ENCODE measurements at regions of chrX and their contacts with region 1.

Region 1: GRCh38 chrX:19544693-19545305 is 29.5 kb upstream of the MAP3K15 start:
- DNase-seq: no peak
- ATAC-seq: peak; percentile 64

Region 2: GRCh38 chrX:18596096-18596495 is 948.7 kb before region 1 on chrX:
- intact Hi-C with region 1: no loop called
- DNase-seq: no peak
- ATAC-seq: peak; percentile 52

Region 3: GRCh38 chrX:19613645-19614323 is 69.0 kb after region 1 on chrX:
- intact Hi-C with region 1: loop called (anchors 10 kb)
- DNase-seq: no peak
- ATAC-seq: peak; percentile 73

Region 4: DNA sequence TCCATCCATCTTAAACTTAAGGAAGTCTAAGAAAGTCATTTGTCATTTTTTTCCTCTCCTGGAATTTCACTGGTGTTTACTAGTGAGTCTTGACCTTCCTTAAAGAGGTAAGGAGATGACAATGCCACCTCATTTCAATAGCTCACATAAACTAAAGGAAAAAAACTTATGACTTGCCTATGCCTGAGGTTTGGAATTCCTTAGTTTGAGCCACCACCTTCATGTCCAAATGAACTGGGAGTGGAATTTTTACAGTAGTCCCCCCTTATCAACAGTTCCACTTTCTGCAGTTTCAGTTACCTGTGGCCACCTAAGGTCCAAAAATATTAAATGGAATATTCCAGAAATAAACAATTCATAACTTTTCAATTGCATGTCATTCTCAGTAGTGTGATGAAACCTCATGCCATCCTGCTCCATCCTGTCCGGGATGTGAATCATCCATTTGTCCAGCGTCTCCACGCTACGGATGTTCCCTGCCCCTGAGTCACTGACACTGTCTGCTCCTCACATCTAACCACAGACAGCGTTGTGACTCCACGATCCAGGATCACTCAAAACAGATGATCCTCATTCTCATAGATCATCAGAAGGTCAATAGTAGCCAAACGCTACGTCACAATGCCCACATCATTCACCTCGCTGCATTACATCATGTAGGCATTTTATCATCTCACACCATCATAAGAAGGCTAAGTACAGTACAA is 165.2 kb after region 1 on chrX:
- intact Hi-C with region 1: no loop called
- DNase-seq: no peak
- ATAC-seq: no peak